ENCODE measurements at regions of chr10 and their contacts with region 1.

Region 1: GRCh38 chr10:31490858-31491504 is 172.0 kb downstream of the ZEB1 start:
- DNase-seq: no peak
- H3K4me3 ChIP-seq: no peak overlapping the region
- H3K27ac ChIP-seq: no peak overlapping the region
- H3K4me1 ChIP-seq: no peaks in the 10 kb centered on the region
- H3K27me3 ChIP-seq: no peaks in the 10 kb centered on the region
- CTCF ChIP-seq: peak in 1 of 3 donors; percentile 20
- POLR2A ChIP-seq: no peak

Region 2: GRCh38 chr10:31508882-31509281 is 17.9 kb after region 1 on chr10:
- intact Hi-C with region 1: loop called (anchors 1 kb)
- DNase-seq: no peak
- H3K4me3 ChIP-seq: no peak overlapping the region
- H3K27ac ChIP-seq: no peak overlapping the region
- H3K4me1 ChIP-seq: no peaks in the 10 kb centered on the region
- H3K27me3 ChIP-seq: no peaks in the 10 kb centered on the region
- CTCF ChIP-seq: no peak
- POLR2A ChIP-seq: no peak